ENCODE measurements at regions of chr5 and their contacts with region 1.

Region 1: DNA sequence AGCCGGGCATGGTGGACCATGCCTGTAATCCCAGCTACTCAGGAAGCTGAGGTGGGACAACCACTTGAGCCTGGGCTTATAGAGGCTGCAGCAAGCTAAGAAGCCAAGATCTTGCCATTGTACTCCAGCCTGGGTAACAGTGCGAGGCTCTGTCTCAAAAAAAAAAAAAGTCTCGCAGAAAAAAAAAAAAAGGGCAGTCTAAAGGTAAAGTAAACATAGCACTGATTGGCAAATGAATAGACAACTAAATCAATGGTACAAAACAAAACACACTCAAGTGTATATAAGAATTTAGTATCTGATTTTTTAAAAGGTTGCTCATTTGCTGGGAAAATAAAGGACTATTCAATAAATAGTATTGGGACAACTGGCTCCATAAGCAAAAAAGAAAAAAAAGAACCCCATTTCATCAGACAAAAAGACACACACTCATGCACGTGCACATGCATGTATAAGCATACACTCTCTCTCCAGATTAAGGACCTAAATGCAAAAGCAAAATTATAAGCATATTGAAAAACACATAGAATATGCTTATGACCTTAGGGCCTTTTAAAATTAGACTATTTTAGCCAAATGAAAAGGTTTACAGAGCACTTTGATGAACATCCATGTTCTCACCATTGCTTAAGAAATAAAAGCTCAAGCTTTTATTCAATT is 5.7 kb downstream of the IL6ST start:
- DNase-seq: no peak
- ATAC-seq: no peak
- H3K4me3 ChIP-seq: peak overlapping the region; percentile 17
- H3K27ac ChIP-seq: no peak overlapping the region
- H3K4me1 ChIP-seq: peaks cover 30% of the 10 kb centered on the region
- H3K27me3 ChIP-seq: no peaks in the 10 kb centered on the region
- CTCF ChIP-seq: no peak

Region 2: DNA sequence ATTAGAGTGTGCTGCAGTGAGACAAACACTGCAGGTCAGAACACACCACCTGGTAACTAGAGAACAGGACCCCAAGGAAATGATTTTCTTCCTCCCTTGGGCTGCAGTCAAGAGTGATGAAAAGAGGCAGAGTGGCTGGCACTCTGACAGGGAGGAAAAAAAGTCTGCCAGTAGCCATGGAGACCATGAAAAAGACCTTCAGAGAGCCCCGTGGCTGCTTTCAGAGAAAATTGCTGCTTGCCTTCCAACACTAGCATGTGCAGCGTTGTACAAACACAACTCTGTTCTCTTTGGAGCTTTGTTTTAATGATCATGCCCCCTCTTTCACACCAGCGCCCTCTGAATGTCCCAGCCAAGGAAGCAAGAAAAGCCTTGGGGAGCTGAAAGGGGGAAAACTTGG is 175.3 kb after region 1 on chr5:
- intact Hi-C with region 1: no loop called
- DNase-seq: no peak
- ATAC-seq: no peak
- H3K4me3 ChIP-seq: no peak overlapping the region
- H3K27ac ChIP-seq: no peak overlapping the region
- H3K4me1 ChIP-seq: peaks cover 27% of the 10 kb centered on the region
- H3K27me3 ChIP-seq: no peaks in the 10 kb centered on the region
- CTCF ChIP-seq: no peak

Region 3: GRCh38 chr5:56175488-56175887 is 186.4 kb after region 1 on chr5:
- intact Hi-C with region 1: no loop called
- DNase-seq: no peak
- ATAC-seq: peak; percentile 66
- H3K4me3 ChIP-seq: no peak overlapping the region
- H3K27ac ChIP-seq: no peak overlapping the region
- H3K4me1 ChIP-seq: peaks cover 32% of the 10 kb centered on the region
- H3K27me3 ChIP-seq: no peaks in the 10 kb centered on the region
- CTCF ChIP-seq: no peak

Region 4: DNA sequence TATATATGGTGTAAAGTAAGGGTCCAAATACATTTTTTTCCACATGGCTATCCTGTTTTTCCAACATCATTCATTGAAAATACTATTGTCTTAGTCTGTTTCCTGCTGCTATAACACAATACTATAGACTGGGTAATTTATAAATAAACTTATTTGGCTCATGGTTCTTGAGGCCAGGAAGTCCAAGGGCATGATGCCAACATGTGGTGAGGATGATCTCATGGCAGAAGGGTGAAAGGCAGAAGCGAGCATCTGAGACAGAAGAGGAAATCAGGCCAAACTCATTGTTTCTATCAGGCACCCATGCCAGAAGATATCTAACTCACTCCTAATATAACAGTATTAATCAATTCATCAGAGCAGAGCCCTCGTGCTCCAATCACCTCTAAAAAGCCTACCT is 201.4 kb after region 1 on chr5:
- intact Hi-C with region 1: loop called (anchors 5 kb)
- DNase-seq: no peak
- ATAC-seq: peak; percentile 81
- H3K4me3 ChIP-seq: no peak overlapping the region
- H3K27ac ChIP-seq: no peak overlapping the region
- H3K4me1 ChIP-seq: no peaks in the 10 kb centered on the region
- H3K27me3 ChIP-seq: no peaks in the 10 kb centered on the region
- CTCF ChIP-seq: no peak